Adrenal gland (tissue), 19 donors: ENCODE measurements at regions of chr3 and their contacts with region 1.

Region 1: GRCh38 chr3:153768561-153769469 is 352.4 kb upstream of the ARHGEF26 start:
- DNase-seq: peak in 6 of 7 donors; percentile 20 to 59 (median 34)
- H3K4me3 ChIP-seq: no peak overlapping the region
- H3K27ac ChIP-seq: no peak overlapping the region
- H3K4me1 ChIP-seq: no peaks in the 10 kb centered on the region
- H3K27me3 ChIP-seq: no peaks in the 10 kb centered on the region
- CTCF ChIP-seq: peak; percentile 51 to 75 (median 70)
- POLR2A ChIP-seq: no peak

Region 2: DNA sequence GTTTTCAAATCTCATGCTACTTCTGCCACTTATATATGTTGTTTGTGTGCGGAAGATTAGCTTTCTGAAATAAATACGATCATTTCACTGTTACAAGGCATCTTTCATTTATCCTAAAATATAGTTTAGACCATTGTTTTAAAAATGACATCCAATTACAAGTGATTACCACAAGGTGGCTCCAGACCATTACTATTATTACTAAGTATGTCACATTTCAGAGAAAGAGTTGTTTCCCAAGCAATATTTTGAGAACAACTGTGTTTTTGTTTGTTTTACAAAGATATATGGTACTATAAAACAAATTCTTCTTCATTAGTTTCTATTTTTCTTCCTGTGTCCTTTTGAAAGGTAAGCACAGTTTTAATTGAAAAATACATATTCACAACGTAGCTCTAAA is 742.8 kb before region 1 on chr3:
- intact Hi-C with region 1: loop called in 1 of 2 experiments (anchors 10 kb)
- DNase-seq: no peak
- H3K4me3 ChIP-seq: no peak overlapping the region
- H3K27ac ChIP-seq: no peak overlapping the region
- H3K4me1 ChIP-seq: no peaks in the 10 kb centered on the region
- H3K27me3 ChIP-seq: no peaks in the 10 kb centered on the region
- CTCF ChIP-seq: peak; percentile 39 to 62 (median 50)
- POLR2A ChIP-seq: no peak

Region 3: DNA sequence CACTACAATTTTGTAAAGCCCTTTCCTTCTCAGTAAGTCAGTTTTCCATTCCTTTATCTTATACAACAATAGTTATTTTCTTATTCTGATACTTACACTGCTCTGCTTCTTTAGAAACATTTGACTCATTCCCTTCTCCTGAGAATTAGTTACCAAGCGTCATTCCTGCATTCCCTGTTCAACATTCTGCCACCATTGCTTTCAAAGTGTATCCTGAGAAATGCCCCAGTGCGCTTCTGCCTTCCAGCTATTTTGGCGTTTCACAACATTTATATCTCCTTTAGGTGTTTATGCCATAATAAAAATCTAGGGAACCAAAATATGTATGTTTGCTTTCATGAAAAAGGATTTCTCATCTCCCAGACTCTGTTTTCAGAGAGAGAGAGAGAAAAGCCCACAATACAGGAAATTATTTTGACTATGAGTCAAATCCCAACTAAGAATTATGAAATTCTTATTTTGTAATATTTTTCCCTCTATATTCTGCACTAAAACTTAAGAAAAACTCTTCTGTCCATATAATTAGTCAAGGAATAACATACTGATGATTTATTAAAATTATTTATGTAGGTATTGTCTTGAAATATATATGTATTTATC is 725.0 kb before region 1 on chr3:
- intact Hi-C with region 1: loop called in 1 of 2 experiments (anchors 5 kb)
- DNase-seq: no peak
- H3K4me3 ChIP-seq: no peak overlapping the region
- H3K27ac ChIP-seq: no peak overlapping the region
- H3K4me1 ChIP-seq: no peaks in the 10 kb centered on the region
- H3K27me3 ChIP-seq: no peaks in the 10 kb centered on the region
- CTCF ChIP-seq: no peak
- POLR2A ChIP-seq: no peak

Region 4: DNA sequence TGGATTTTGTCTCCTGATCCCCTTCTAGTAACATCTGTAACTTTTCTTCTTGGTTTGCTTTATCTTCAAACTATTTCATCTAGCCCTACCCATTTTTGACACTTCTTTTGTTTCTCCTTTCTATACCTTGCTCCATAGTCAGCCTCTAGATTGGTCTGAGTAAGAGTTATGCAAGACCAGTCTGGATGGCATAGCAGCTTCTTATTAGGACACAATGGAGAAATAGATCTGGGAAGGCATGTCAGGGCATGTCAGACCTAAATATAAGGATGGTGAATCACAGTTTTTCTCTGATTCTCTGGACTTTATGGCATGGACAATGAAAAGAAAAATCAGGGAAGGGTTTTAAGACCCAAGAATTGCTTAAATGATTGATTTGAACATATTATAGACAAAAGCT is 154.3 kb before region 1 on chr3:
- intact Hi-C with region 1: no loop called
- DNase-seq: no peak
- H3K4me3 ChIP-seq: no peak overlapping the region
- H3K27ac ChIP-seq: no peak overlapping the region
- H3K4me1 ChIP-seq: no peaks in the 10 kb centered on the region
- H3K27me3 ChIP-seq: no peaks in the 10 kb centered on the region
- CTCF ChIP-seq: no peak
- POLR2A ChIP-seq: no peak